Activated naive CD4-positive, alpha-beta T cell treated with anti-CD3 and anti-CD28 coated beads for 36 hours (primary cell): ENCODE measurements at regions of chr2 and their contacts with region 1.

Region 1: DNA sequence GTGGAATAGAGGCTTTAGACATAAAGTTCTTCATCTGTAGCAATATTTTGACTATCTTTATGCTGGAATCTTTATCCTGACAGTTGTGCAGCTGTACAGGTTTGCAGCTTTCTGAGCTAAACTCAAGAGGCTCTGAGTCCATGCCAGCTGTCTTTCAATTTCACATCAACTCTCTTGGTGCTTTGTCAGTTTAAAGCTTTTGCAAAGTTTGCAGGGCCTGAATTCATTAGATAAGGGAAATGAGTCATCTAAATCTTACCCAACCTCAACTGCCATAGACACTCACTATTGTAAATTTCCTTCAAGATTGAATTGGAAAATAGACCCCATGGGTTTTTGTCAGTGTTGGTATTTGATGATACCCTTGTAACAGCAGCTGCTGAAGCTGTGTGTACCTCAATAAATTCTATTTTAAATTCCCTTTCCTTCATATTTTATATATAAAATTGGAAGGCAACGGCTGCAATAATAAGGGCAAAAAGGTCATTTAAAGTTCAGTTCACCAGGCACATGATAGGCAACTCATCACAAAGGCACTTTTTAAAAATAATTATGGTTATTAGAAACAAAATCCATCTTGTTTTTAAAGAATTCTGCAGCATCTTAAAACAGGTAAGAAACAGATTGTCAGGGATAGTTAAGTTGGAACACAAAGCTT is 169.9 kb upstream of the SLC39A10 start:
- DNase-seq: peak; percentile 34
- H3K4me3 Mint-ChIP-seq: no peak overlapping the region
- H3K27ac Mint-ChIP-seq: peak overlapping the region; percentile 64
- H3K4me1 Mint-ChIP-seq: peaks cover 16% of the 10 kb centered on the region
- H3K27me3 Mint-ChIP-seq: no peaks in the 10 kb centered on the region

Region 2: DNA sequence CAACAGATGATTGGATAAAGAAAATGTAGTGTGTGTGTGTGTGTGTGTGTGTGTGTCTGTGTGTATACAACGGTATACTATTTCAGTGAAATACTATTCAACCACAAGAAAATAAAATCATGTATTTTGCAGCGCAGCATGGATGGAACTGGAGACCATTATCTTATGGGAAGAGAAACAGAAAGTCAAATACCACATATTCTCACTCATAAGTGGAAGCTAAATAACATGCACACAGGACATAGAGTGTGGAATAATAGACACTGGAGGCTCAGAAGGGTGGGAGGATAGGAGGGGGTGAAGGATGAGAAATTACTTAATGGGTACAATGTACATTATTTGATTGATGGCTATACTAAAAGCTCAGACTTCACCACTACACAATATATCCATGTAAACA is 439.2 kb before region 1 on chr2:
- CTCF ChIA-PET with region 1: no interaction called
- intact Hi-C with region 1: no loop called
- DNase-seq: no peak
- H3K4me3 Mint-ChIP-seq: no peak overlapping the region
- H3K27ac Mint-ChIP-seq: no peak overlapping the region
- H3K4me1 Mint-ChIP-seq: peaks cover 4% of the 10 kb centered on the region
- H3K27me3 Mint-ChIP-seq: no peaks in the 10 kb centered on the region

Region 3: DNA sequence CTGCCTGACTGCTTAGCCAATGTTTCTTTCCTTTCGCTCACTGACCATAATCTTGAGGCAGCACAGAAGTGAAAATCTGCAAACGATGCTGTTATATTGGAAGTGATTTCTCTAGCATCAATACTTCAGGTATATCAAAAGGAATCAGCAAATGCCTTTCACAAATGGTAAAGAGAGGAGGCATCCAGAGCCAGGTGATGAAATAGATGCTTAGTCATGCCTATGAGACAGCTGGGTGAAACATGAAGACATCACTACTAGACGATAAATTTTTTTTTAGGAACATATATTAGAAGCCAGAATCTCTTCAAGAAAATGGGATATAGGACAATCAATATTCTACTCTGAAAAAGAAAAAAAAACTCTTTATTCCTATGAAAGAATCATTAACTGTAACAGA is 79.3 kb before region 1 on chr2:
- CTCF ChIA-PET with region 1: interaction called, 3 read pairs
- intact Hi-C with region 1: loop called (anchors 5 kb)
- DNase-seq: no peak
- H3K4me3 Mint-ChIP-seq: no peak overlapping the region
- H3K27ac Mint-ChIP-seq: no peak overlapping the region
- H3K4me1 Mint-ChIP-seq: peaks cover 18% of the 10 kb centered on the region
- H3K27me3 Mint-ChIP-seq: no peaks in the 10 kb centered on the region

Region 4: DNA sequence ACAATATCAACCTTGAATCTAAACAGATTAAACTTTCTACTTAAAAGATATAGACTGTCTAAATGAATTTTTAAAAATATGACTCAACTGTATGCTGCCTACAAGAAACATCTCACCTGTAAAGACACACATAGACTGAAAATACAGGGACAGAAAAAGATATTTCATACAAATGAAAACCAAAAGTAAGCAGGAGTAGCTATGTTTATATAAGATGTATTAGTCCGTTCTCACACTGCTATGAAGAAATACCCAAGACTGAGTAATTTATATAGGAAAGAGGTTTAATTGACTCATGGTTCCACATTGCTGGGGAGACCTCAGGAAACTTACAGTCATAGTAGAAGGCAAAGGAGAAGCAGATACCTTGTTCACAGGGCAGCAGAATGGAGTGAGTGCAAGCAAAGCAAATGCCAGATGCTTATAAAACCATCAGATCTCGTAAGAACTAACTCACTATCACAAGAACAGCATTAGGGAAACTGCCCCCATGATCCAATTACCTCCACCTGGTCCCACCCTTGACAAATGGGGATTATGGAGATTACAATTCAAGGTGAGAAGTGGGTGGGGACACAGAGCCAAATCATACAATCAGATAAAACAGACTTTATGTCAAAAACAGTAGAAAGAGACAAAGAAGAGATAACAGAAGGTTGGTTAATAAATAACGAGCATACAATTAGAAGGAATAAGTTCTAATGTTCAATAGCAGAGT is 44.5 kb before region 1 on chr2:
- CTCF ChIA-PET with region 1: no interaction called
- intact Hi-C with region 1: loop called (anchors 1 kb)
- DNase-seq: peak; percentile 19
- H3K4me3 Mint-ChIP-seq: no peak overlapping the region
- H3K27ac Mint-ChIP-seq: peak overlapping the region; percentile 18
- H3K4me1 Mint-ChIP-seq: peaks cover 8% of the 10 kb centered on the region
- H3K27me3 Mint-ChIP-seq: no peaks in the 10 kb centered on the region

Region 5: DNA sequence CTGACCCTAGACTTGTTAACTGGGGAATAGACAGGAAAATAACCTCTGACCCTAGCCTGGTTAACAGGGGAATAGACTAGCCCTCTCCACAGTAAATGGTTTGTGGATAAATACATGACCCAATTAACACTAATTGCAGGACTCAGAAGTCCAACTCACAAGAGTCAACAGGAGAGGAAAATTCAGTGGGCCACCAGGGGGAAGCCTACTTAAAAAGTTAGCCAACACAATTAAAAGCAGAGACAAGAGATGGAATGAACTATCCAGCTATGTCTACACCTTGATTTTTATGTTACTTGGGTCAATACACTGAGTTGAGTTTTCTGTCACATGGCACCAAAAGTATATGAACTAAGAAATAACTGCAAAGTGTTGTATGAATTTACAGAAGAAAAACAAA is 11.1 kb after region 1 on chr2:
- CTCF ChIA-PET with region 1: interaction called, 10 read pairs
- intact Hi-C with region 1: no loop called
- DNase-seq: peak; percentile 76
- H3K4me3 Mint-ChIP-seq: no peak overlapping the region
- H3K27ac Mint-ChIP-seq: no peak overlapping the region
- H3K4me1 Mint-ChIP-seq: peaks cover 44% of the 10 kb centered on the region
- H3K27me3 Mint-ChIP-seq: no peaks in the 10 kb centered on the region

Region 6: GRCh38 chr2:195543902-195544894 is 57.1 kb after region 1 on chr2:
- CTCF ChIA-PET with region 1: interaction called, 3 read pairs
- intact Hi-C with region 1: loop called (anchors 1 kb)
- DNase-seq: peak; percentile 72
- H3K4me3 Mint-ChIP-seq: peak overlapping the region; percentile 40
- H3K27ac Mint-ChIP-seq: peak overlapping the region; percentile 91
- H3K4me1 Mint-ChIP-seq: peaks cover 67% of the 10 kb centered on the region
- H3K27me3 Mint-ChIP-seq: no peaks in the 10 kb centered on the region

Region 7: DNA sequence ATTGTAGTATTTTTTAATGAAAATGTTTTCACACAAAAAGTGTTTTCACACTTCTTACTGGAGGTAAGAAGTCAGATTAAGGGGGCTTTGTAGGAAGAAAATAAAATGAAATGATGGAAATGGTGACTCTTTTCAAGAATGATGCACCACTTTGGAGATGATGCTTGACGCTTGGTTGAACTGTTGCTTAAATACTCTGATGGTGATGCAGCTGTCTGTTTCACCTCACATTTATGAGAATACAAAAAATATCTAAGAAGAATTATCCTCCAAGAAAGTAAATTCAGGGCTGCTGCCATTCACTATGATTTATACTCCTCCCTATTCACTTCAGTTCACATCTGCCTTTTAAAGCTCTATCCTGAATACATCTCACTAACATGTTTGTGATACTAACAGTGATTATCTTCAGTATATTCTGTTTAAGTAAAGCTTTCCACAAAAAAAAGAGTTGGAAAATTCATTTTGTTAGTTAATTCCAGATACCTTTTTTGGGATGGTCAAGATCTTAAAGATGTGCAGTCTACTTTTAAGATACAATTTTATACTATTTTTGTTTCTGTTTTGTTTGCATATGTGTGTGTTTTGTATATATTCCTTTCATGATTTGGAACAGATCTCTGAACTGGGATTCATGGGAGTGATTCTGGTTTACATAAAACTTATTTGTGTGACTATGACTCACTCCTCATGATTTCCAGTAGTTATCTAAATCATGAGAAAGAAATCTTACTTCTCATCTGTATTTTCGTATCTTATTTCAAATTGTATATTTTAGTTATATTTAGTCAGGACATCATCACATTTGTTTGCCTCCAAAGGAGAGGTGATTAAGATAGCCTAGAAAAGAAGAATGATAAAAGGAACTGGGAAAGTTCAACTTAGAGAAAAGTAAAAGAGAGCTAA is 223.0 kb after region 1 on chr2:
- CTCF ChIA-PET with region 1: no interaction called
- intact Hi-C with region 1: no loop called
- DNase-seq: no peak
- H3K4me3 Mint-ChIP-seq: no peak overlapping the region
- H3K27ac Mint-ChIP-seq: no peak overlapping the region
- H3K4me1 Mint-ChIP-seq: peaks cover 2% of the 10 kb centered on the region
- H3K27me3 Mint-ChIP-seq: no peaks in the 10 kb centered on the region

Region 8: GRCh38 chr2:195769975-195770374 is 282.9 kb after region 1 on chr2:
- CTCF ChIA-PET with region 1: no interaction called
- intact Hi-C with region 1: no loop called
- DNase-seq: no peak
- H3K4me3 Mint-ChIP-seq: no peak overlapping the region
- H3K27ac Mint-ChIP-seq: no peak overlapping the region
- H3K4me1 Mint-ChIP-seq: no peaks in the 10 kb centered on the region
- H3K27me3 Mint-ChIP-seq: no peaks in the 10 kb centered on the region

Region 9: DNA sequence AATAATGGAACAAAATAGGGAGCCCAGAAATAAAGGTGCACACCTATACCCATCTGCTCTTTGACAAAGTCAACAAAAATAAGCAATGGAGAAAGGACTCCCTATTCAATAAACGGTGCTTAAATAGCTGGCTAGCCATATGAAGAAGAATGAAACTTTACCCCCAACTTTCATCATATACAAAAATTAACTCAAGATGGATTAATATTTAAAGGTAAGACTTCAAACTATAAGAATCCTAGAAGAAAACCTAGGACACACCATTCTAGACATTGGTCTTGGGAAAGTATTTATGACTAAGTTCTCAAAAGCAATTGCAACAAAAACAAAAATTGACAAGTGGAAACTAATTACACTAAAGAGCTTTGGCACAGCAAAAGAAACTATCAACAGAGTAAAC is 442.4 kb after region 1 on chr2:
- CTCF ChIA-PET with region 1: no interaction called
- intact Hi-C with region 1: loop called (anchors 10 kb)
- DNase-seq: no peak
- H3K4me3 Mint-ChIP-seq: no peak overlapping the region
- H3K27ac Mint-ChIP-seq: no peak overlapping the region
- H3K4me1 Mint-ChIP-seq: no peaks in the 10 kb centered on the region
- H3K27me3 Mint-ChIP-seq: no peaks in the 10 kb centered on the region